WTC11 (cell line): ENCODE measurements at regions of chr15 and their contacts with region 1.

Region 1: DNA sequence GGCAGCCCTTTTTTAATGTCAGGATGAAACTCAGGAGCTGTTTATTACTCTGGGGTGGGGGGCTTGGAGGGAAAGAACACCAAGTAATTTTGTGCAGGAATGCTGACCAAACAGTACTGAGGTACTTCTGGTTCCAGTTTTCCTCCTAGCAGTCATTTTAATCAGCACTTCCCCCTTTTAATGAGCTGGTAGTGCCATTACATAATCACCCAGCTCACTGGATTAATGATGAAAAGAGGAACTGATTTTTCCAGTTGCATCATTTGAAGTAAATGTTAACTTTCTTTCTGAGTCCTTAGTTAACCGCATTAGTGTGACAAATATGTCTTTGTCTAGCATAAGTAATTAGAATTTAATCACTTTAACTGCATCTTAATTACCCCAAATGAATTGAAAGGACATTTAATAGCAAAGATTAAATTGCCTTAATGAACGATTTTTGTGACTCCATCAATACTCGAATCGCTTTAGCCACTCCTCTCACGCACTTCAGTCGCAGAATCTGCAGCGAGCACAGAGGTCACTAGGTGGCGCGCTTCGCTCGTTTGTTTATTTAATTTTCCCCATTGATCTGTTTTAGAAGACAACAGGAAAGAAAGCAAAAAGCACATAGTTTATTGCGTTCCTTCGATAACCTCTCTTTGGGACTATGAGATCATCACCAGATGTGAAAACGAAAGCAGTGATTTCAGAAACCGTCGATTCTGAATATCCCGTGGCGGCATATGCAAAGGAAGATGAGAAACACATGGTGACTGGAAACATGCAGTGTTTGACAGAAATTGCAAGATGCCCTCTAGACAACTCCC is 9.8 kb downstream of the ONECUT1 start:
- DNase-seq: peak; percentile 71
- ATAC-seq: no peak
- H3K4me3 Mint-ChIP-seq: no peak overlapping the region; the same call in 1 of the 2 replicates
- H3K27ac Mint-ChIP-seq: no peak overlapping the region
- H3K4me1 Mint-ChIP-seq: peaks cover 76% of the 10 kb centered on the region
- H3K27me3 Mint-ChIP-seq: peaks cover 39% of the 10 kb centered on the region
- CTCF ChIP-seq: peak; percentile 84

Region 2: DNA sequence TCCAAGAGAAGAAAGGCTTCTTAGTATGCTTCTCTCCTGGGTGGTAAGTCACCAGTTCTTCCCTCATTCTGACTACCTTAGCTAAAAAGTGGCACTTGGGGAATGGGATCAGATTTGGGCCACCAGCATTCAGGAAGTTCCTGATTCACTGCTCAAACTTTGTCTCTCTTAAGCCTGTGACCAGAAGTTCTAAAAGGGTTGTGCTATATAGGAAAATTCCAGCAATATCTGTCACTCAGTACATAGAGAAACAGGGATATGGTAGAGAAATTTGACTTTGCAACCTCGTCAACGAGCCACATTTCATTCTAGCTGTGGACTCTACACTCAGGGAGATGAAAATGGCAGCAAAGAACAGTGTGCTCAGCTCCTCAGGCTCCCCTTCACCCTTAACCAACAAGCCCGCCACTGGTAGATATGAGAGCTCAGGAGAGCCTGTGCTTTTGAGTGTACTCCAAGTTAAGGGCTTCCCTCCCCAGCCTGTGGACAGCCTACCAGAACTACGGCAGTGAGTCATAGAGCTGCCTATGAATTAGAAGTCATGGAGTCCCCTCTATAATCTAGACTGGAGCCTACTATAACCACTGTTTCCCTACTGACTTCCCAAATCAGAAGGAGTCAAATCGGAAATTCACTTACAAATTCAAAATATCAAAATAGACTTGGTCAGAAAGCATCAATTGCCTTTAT is 432.2 kb before region 1 on chr15:
- CTCF ChIA-PET with region 1: no interaction called
- POLR2A ChIA-PET with region 1: no interaction called
- DNase-seq: no peak
- ATAC-seq: no peak
- H3K4me3 Mint-ChIP-seq: no peak overlapping the region
- H3K27ac Mint-ChIP-seq: peak overlapping the region; percentile 44; the same call in 1 of the 2 replicates
- H3K4me1 Mint-ChIP-seq: no peaks in the 10 kb centered on the region
- H3K27me3 Mint-ChIP-seq: no peaks in the 10 kb centered on the region
- CTCF ChIP-seq: no peak

Region 3: DNA sequence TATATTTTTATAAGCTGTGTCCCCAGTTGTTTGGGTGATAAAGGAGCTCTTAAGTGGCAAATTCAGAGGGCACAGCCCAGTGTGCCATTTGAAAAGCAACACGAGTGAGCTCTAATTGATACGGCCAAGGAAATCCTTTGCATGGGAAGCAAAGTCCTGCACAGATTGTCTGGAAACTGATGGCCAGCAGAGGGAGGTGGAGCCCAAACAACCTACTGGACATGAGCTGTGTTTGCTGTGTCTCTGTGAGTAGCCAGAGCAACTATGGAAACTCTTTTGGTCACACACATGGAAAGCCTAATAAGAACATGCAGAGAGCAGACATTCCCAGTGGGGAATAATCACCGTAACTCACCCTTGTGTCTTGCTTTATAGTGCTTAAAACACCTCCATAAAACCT is 14.6 kb before region 1 on chr15:
- CTCF ChIA-PET with region 1: interaction called, 25 read pairs
- POLR2A ChIA-PET with region 1: no interaction called
- DNase-seq: no peak
- ATAC-seq: peak; percentile 67
- H3K4me3 Mint-ChIP-seq: no peak overlapping the region
- H3K27ac Mint-ChIP-seq: no peak overlapping the region
- H3K4me1 Mint-ChIP-seq: peaks cover 33% of the 10 kb centered on the region
- H3K27me3 Mint-ChIP-seq: no peaks in the 10 kb centered on the region
- CTCF ChIP-seq: no peak

Region 4: GRCh38 chr15:52797625-52798501 is 17.5 kb after region 1 on chr15:
- CTCF ChIA-PET with region 1: interaction called, 104 read pairs
- POLR2A ChIA-PET with region 1: interaction called, 38 read pairs
- DNase-seq: peak; percentile 46
- ATAC-seq: peak; percentile 16
- H3K4me3 Mint-ChIP-seq: peak overlapping the region; percentile 67
- H3K27ac Mint-ChIP-seq: no peak overlapping the region
- H3K4me1 Mint-ChIP-seq: peaks cover 94% of the 10 kb centered on the region
- H3K27me3 Mint-ChIP-seq: peaks cover 100% of the 10 kb centered on the region
- CTCF ChIP-seq: no peak

Region 5: GRCh38 chr15:52805351-52806283 is 25.2 kb after region 1 on chr15:
- CTCF ChIA-PET with region 1: interaction called, 103 read pairs
- POLR2A ChIA-PET with region 1: interaction called, 38 read pairs
- DNase-seq: peak; percentile 61
- ATAC-seq: peak; percentile 41
- H3K4me3 Mint-ChIP-seq: peak overlapping the region; percentile 55
- H3K27ac Mint-ChIP-seq: no peak overlapping the region
- H3K4me1 Mint-ChIP-seq: peaks cover 61% of the 10 kb centered on the region
- H3K27me3 Mint-ChIP-seq: peaks cover 34% of the 10 kb centered on the region
- CTCF ChIP-seq: no peak

Region 6: GRCh38 chr15:53197426-53197839 is 417.1 kb after region 1 on chr15:
- CTCF ChIA-PET with region 1: interaction called, 10 read pairs
- POLR2A ChIA-PET with region 1: no interaction called
- DNase-seq: peak; percentile 84
- ATAC-seq: peak; percentile 99
- H3K4me3 Mint-ChIP-seq: peak overlapping the region; percentile 53
- H3K27ac Mint-ChIP-seq: no peak overlapping the region
- H3K4me1 Mint-ChIP-seq: peaks cover 19% of the 10 kb centered on the region
- H3K27me3 Mint-ChIP-seq: peaks cover 12% of the 10 kb centered on the region
- CTCF ChIP-seq: peak; percentile 94